Common myeloid progenitor, CD34-positive (primary cell): ENCODE measurements at regions of chr2 and their contacts with region 1.

Region 1: GRCh38 chr2:16507655-16508489 is 157.8 kb downstream of the CYRIA start:
- DNase-seq: peak; percentile 58 to 83 (median 83)
- H3K4me3 ChIP-seq: peak overlapping the region in 5 of 7 experiments; percentile 32 to 68 (median 43)
- H3K27ac ChIP-seq: no peak overlapping the region
- H3K4me1 ChIP-seq: peaks cover 2 to 16% (median 13%) of the 10 kb centered on the region in 4 experiments
- H3K27me3 ChIP-seq: peaks cover 0 to 2% (median 0%) of the 10 kb centered on the region in 5 experiments

Region 2: DNA sequence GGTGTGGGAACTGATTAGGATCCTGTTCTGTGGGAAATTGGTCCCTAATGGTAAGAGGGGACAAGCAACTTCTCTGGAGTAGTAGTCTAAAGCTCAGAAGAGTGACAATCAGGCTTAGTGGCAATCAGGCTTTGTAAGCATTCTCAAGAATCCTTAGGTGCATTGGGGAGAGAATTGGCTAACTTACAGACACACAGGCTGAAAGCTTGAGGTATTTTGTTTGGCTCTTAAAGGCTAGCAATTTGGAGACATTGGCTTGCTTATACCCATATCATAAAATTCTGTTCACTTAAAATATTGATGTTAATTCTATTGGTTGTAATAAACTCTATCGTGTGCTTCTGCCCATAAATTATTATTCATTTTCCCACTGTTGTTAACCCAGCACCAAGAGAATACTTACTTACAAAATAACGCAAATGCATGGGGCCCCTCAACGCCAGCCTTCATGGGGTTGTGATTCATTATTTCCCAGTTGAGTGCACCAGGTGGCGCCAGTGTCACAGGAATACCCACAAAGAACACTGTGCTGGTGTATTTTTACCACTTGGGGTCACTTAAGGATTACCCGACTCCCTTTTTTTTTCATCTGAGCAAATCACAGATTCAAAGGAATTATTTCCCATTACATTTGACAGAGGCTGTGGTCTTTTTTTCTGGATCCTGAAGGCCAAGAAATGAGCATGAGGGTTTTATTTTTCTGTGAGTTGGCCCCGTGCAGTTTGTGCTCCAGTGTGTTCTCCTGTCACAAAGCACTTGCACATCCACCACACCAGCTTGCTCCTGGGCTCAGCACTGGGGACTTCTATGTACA is 870.7 kb before region 1 on chr2:
- CTCF ChIA-PET with region 1: interaction called, 32 read pairs
- POLR2A ChIA-PET with region 1: no interaction called
- DNase-seq: peak; percentile 77 to 86 (median 79)
- H3K4me3 ChIP-seq: no peak overlapping the region
- H3K27ac ChIP-seq: no peak overlapping the region
- H3K4me1 ChIP-seq: peaks cover 0 to 15% (median 11%) of the 10 kb centered on the region in 4 experiments
- H3K27me3 ChIP-seq: no peaks in the 10 kb centered on the region

Region 3: DNA sequence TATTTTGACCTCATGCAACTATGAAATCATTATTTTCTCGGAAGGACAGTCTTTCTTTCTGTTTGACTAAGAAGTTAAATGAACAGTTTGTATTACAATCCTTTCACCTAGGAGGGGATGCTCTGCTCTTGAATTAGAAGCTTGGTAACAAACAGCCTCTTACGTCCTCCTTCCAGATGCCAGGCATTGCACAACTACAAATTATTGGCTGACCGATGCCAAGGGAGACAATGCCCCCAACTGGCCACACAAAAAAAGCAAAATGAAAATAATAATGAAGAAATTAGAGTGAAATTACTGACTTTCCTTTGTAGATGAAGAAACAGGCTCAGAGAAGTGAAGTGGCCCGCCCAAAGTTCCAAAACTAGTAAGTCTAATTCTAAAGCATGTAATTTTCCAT is 20.2 kb before region 1 on chr2:
- CTCF ChIA-PET with region 1: interaction called, 19 read pairs
- POLR2A ChIA-PET with region 1: no interaction called
- DNase-seq: peak; percentile 81 to 87 (median 85)
- H3K4me3 ChIP-seq: no peak overlapping the region
- H3K27ac ChIP-seq: peak overlapping the region in 1 of 2 experiments; percentile 17
- H3K4me1 ChIP-seq: peaks cover 17 to 59% (median 44%) of the 10 kb centered on the region in 4 experiments
- H3K27me3 ChIP-seq: no peaks in the 10 kb centered on the region

Region 4: DNA sequence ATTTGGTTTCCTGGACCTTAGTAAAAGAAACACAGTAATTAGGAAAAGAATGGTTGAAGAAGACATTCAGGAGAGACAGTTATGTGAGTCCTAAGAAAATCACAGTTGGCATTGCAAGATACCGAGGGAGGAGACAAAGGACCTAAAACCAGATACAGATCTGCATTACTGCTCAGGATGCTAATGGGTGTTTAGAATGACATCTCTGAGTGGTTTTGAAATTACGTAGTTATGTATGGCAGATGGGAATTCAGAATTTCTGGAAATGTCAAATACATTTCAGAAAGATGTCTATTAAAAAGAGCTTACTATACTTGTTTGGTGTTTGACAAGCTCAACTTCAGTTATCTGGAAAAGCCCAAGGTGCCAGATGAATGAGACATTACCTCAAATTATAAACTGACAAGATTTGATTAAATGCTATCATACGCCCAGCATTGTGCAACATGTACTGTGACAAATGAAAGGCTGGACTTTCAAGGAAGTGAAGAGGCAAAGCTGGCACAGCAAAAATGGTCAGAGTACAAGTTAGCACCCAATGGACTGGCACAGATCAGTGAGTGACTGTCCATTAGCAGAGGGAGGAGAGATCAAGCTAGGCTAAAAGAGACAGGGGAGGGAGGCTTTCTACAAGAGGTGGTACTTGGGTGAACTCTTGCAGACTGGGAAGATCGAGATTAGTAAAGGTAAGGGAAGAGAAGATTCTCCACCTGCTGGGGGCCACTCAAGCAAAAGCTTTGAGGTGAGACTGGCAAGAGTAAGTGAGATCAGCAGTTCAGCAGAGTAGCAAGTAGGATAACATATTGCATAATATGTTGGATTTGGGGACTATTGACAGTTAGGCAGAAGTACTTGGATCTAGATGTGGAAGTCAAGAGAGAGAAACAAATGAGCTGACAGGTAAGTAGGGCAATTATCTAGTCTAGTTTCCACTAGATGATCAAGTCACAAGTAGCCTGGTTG is 11.2 kb before region 1 on chr2:
- CTCF ChIA-PET with region 1: interaction called, 37 read pairs
- POLR2A ChIA-PET with region 1: no interaction called
- DNase-seq: no peak
- H3K4me3 ChIP-seq: no peak overlapping the region
- H3K27ac ChIP-seq: no peak overlapping the region
- H3K4me1 ChIP-seq: peaks cover 6 to 27% (median 21%) of the 10 kb centered on the region in 4 experiments
- H3K27me3 ChIP-seq: no peaks in the 10 kb centered on the region